ENCODE measurements at regions of chr16 and their contacts with region 1.

Region 1: DNA sequence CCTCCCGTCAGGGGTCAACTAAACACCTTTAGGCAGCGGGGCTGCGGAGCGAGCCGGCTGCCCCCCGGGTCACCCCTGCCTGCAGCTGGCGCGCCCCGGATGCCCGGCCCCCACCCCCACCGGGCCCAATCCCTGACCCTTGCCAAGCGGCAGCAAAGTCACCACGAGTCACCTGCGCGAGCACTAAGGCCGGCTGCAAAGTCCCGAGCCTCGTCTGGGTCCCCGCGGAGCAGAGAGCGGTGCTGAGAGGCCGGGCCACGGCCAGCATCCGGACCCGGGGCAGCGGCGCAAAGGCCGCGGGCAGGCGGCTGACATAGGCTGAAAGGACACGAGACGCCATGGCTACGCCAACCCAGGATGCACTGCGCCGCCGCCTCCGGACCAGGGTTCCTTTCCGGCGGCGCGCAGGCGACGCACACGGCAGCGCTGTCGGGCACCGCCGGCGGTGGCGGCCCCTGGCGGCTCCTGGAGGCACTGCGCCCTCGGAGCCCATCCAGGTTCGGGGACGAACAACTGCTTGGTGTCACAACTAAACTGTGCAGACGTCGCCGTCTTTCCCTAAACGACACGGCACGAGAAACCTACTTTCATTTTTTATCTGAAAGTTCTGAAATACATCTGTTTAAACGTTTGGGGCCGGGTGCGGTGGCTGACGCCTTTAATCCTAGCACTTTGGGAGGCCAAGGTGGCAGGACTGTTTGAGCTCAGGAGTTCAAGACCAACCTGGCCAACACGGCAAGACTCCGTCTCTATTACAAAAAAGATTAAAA is at the start of gene NDUFAB1:
- DNase-seq: peak; percentile 88
- H3K4me3 Mint-ChIP-seq: peak within 1 kb of the TSS; percentile 81
- H3K27ac Mint-ChIP-seq: peak within 1 kb of the TSS; percentile 86
- H3K4me1 Mint-ChIP-seq: peaks cover 14% of the 10 kb centered on the region
- H3K27me3 Mint-ChIP-seq: no peaks in the 10 kb centered on the region
- total RNA-seq, gene NDUFAB1: 132 and 142 TPM in 2 replicates

Region 2: GRCh38 chr16:23452572-23453337 is 143.4 kb before region 1 on chr16 and contains the start of gene COG7:
- intact Hi-C with region 1: loop called (anchors 1 kb)
- DNase-seq: peak; percentile 84
- H3K4me3 Mint-ChIP-seq: peak within 1 kb of the TSS; percentile 99
- H3K27ac Mint-ChIP-seq: peak within 1 kb of the TSS; percentile 92
- H3K4me1 Mint-ChIP-seq: peaks cover 13% of the 10 kb centered on the region
- H3K27me3 Mint-ChIP-seq: no peaks in the 10 kb centered on the region
- total RNA-seq, gene COG7: 23.8 and 24.2 TPM in 2 replicates

Region 3: GRCh38 chr16:23504451-23505179 is 91.5 kb before region 1 on chr16:
- intact Hi-C with region 1: loop called (anchors 10 kb)
- DNase-seq: peak; percentile 68
- H3K4me3 Mint-ChIP-seq: peak overlapping the region; percentile 15
- H3K27ac Mint-ChIP-seq: peak overlapping the region; percentile 77
- H3K4me1 Mint-ChIP-seq: peaks cover 64% of the 10 kb centered on the region
- H3K27me3 Mint-ChIP-seq: no peaks in the 10 kb centered on the region

Region 4: DNA sequence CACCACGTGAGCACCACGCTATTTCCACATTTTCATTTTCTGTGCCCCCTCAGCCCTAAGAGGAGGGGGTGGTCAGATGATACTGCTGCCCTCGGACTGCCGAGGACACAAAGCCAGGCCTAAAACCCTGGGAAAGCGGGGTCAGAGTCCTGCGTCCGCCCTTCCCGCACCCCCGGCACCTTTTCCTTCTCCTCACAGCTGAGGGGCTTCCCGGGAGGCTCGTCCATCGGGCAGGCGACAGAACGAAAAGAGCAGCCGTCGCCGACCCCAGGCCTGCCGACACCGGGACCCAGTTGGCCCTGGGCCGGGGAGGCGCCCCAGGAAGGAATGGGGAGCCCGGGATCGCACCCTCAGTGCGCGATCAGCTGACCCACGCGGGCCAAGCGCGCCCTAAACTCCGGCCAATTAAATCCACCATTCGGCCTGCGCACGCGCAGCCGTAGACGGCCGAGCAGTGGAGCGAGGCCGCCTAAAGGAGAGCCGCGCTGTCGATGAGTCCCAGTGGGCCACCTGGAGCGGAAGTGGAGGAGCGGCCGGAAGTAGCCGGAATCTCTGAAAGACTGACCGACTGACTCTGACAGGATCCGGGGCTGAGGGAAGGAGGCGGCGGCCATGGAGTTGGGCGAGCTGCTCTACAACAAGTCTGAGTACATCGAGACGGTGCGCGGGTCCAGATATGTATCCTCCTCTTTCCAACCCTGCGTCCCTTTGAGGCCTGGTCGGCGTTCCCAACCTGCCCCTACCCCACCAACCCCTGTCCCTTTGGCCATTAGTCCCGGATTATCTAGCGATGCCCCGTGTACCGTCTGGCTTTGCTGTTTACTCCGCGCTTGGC is 45.0 kb after region 1 on chr16 and contains the starts of genes DCTN5 and PALB2:
- intact Hi-C with region 1: loop called (anchors 1 kb)
- DNase-seq: peak; percentile 87
- H3K4me3 Mint-ChIP-seq: peak within 1 kb of the TSS; percentile 97
- H3K27ac Mint-ChIP-seq: peak within 1 kb of the TSS; percentile 94
- H3K4me1 Mint-ChIP-seq: peaks cover 22% of the 10 kb centered on the region
- H3K27me3 Mint-ChIP-seq: no peaks in the 10 kb centered on the region
- total RNA-seq, gene DCTN5: 86.5 and 88.4 TPM in 2 replicates
- total RNA-seq, gene PALB2: 25.6 and 30.8 TPM in 2 replicates

Region 5: GRCh38 chr16:23678430-23679273 is 82.5 kb after region 1 on chr16 and contains the start of gene PLK1:
- intact Hi-C with region 1: loop called (anchors 1 kb)
- DNase-seq: peak; percentile 81
- H3K4me3 Mint-ChIP-seq: peak within 1 kb of the TSS; percentile 96
- H3K27ac Mint-ChIP-seq: peak within 1 kb of the TSS; percentile 87
- H3K4me1 Mint-ChIP-seq: peaks cover 29% of the 10 kb centered on the region
- H3K27me3 Mint-ChIP-seq: no peaks in the 10 kb centered on the region
- total RNA-seq, gene PLK1: 71.6 and 75.3 TPM in 2 replicates

Measured in activated T-helper 2 cell treated with anti-CD3 and anti-CD28 coated beads, Interferon-gamma antibody, Interleukin-2, Interleukin-4, amounts not matched to agents 10 μg/mL and 5 μg/mL and 100 μg/mL, durations not matched to agents 14 hours and 24 hours and 36 hours (primary cell).